ENCODE measurements at regions of chr17 and their contacts with region 1.

Region 1: GRCh38 chr17:37844158-37844976 is 79.8 kb upstream of the TBC1D3K start:
- DNase-seq: peak; percentile 56
- ATAC-seq: peak; percentile 99
- H3K4me3 ChIP-seq: peak overlapping the region; percentile 6 to 56 (median 17); a peak in 4 of 6 replicates
- H3K27ac ChIP-seq: no peak overlapping the region
- H3K4me1 ChIP-seq: peaks cover 36% of the 10 kb centered on the region
- H3K27me3 ChIP-seq: 0 out of 5 replicates have a peak, but pooled peaks cover 1 to 6% of the 10 kb centered on the region in 2 experiments
- CTCF ChIP-seq: peak; percentile 95
- EP300 ChIP-seq: no peak
- POLR2A ChIP-seq: no peak
- RAD21 ChIP-seq: peak; percentile 94

Region 2: DNA sequence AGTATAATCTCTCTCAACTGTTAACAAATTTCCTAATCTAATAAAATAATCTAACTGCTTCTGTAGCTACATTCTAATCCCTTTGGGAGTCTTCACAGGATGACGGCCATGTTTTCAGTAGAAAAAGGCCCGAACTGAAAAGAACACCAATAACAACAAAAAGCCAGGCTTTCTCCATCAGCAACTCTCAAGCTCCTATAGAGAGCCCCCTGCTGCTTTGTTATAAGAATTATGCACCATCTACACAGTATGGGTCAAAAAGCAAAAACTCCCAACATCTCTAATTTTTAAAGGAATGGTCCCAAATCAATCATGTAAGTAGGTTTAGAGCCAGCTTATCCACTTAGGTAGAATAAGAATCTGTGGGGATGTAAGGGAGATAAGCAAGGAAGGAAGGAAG is 632.2 kb before region 1 on chr17:
- CTCF ChIA-PET with region 1: no interaction called
- POLR2A ChIA-PET with region 1: no interaction called
- in situ Hi-C with region 1: no loop called
- intact Hi-C with region 1: no loop called
- DNase-seq: no peak
- ATAC-seq: 0 out of 3 replicates have a peak, but pooled peaks have one; percentile 33
- H3K4me3 ChIP-seq: no peak overlapping the region
- H3K27ac ChIP-seq: no peak overlapping the region
- H3K4me1 ChIP-seq: no peaks in the 10 kb centered on the region
- H3K27me3 ChIP-seq: no peaks in the 10 kb centered on the region
- CTCF ChIP-seq: no peak
- EP300 ChIP-seq: no peak
- POLR2A ChIP-seq: no peak
- RAD21 ChIP-seq: no peak

Region 3: DNA sequence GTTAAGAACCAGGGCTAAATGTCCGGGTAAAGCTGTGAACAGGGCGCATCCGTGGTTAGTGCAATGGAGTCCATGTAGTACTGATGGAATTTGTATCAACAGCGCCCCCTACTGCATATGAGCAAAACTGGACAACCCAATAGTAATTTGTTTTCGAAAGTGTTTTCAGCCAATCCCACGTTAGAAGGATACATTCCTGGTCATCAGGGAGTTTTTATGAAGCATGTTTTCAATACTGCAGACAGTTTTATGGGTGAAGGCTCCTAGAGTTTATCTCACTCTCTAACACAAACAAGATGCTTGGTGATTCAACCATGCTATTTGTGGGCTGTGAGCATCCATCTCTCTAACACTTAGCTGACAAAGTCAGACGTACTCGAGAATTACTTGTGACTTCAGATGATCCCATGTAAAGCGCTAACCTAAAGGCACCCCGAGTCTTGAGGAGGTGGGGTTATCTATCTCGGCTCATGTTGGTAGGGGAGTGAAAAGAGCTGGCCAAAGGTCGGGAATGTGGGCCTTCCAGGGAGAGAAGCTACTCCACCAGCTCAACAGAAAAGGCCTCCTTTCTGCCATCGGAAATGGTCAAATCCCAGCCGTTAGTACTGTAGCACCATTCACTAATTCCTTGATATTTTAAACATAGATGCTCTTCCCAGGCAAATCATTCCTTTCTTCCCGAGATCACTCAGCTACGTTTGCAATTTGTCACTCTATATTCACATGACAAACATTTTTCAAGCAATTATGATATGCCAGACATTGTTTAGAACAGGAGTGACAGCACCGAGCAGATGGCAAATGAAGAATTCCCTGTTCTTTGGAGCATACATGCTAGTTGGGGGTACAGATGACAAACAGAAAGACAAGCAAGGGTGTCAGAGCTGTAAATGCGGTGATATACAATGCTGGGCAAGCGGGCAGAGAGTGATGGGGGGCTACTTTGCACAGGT is 52.6 kb before region 1 on chr17:
- CTCF ChIA-PET with region 1: no interaction called
- POLR2A ChIA-PET with region 1: no interaction called
- in situ Hi-C with region 1: no loop called
- intact Hi-C with region 1: loop called (anchors 10 kb)
- DNase-seq: peak; percentile 45
- ATAC-seq: no peak
- H3K4me3 ChIP-seq: no peak overlapping the region
- H3K27ac ChIP-seq: no peak overlapping the region
- H3K4me1 ChIP-seq: peaks cover 36% of the 10 kb centered on the region
- H3K27me3 ChIP-seq: peaks cover 6 to 24% of the 10 kb centered on the region in 2 experiments; a peak in 4 of 5 replicates
- CTCF ChIP-seq: peak; percentile 66
- EP300 ChIP-seq: no peak
- POLR2A ChIP-seq: no peak
- RAD21 ChIP-seq: peak; percentile 31; the same call in 1 of the 2 replicates

Region 4: GRCh38 chr17:37833237-37833859 is 11.0 kb before region 1 on chr17:
- CTCF ChIA-PET with region 1: no interaction called
- POLR2A ChIA-PET with region 1: no interaction called
- in situ Hi-C with region 1: no loop called
- intact Hi-C with region 1: loop called (anchors 2 kb)
- DNase-seq: no peak
- ATAC-seq: no peak
- H3K4me3 ChIP-seq: no peak overlapping the region
- H3K27ac ChIP-seq: no peak overlapping the region
- H3K4me1 ChIP-seq: peaks cover 46% of the 10 kb centered on the region
- H3K27me3 ChIP-seq: no peaks in the 10 kb centered on the region
- CTCF ChIP-seq: no peak
- EP300 ChIP-seq: no peak
- POLR2A ChIP-seq: no peak
- RAD21 ChIP-seq: no peak

Measured in HepG2 (cell line).